ENCODE measurements at regions of chr3 and their contacts with region 1.

Region 1: GRCh38 chr3:126703512-126704462 is at the start of gene CHCHD6:
- DNase-seq: peak; percentile 95
- H3K4me3 ChIP-seq: peak within 1 kb of the TSS; percentile 31 to 45 (median 35)
- H3K27ac ChIP-seq: no peak within 1 kb of the TSS
- H3K4me1 ChIP-seq: peaks cover 10% of the 10 kb centered on the region
- H3K27me3 ChIP-seq: peaks cover 4 to 21% of the 10 kb centered on the region in 2 experiments
- CTCF ChIP-seq: peak in 1 of 2 donors; percentile 2
- POLR2A ChIP-seq: no peak
- total RNA-seq, gene CHCHD6: 8.4 and 13.4 TPM in 2 replicates

Region 2: GRCh38 chr3:126654571-126655383 is 49.0 kb before region 1 on chr3 and contains the start of gene TXNRD3:
- CTCF ChIA-PET with region 1: no interaction called
- POLR2A ChIA-PET with region 1: no interaction called
- dilution Hi-C with region 1: no loop called
- intact Hi-C with region 1: loop called (anchors 2 kb)
- DNase-seq: peak; percentile 64
- H3K4me3 ChIP-seq: peak within 1 kb of the TSS; percentile 41 to 84 (median 55)
- H3K27ac ChIP-seq: peak within 1 kb of the TSS; percentile 37
- H3K4me1 ChIP-seq: peaks cover 8% of the 10 kb centered on the region
- H3K27me3 ChIP-seq: peaks cover 0 to 6% of the 10 kb centered on the region in 2 experiments
- CTCF ChIP-seq: no peak
- POLR2A ChIP-seq: no peak
- total RNA-seq, gene TXNRD3: 5.0 and 7.1 TPM in 2 replicates

Region 3: GRCh38 chr3:126921085-126921824 is 217.5 kb after region 1 on chr3:
- CTCF ChIA-PET with region 1: no interaction called
- POLR2A ChIA-PET with region 1: no interaction called
- dilution Hi-C with region 1: no loop called
- intact Hi-C with region 1: loop called (anchors 2 kb)
- DNase-seq: peak; percentile 81
- H3K4me3 ChIP-seq: no peak overlapping the region
- H3K27ac ChIP-seq: no peak overlapping the region
- H3K4me1 ChIP-seq: peaks cover 33% of the 10 kb centered on the region
- H3K27me3 ChIP-seq: peaks cover 30 to 45% of the 10 kb centered on the region in 2 experiments
- CTCF ChIP-seq: no peak
- POLR2A ChIP-seq: no peak